HAP-1 (cell line): ENCODE measurements at regions of chr10 and their contacts with region 1.

Region 1: DNA sequence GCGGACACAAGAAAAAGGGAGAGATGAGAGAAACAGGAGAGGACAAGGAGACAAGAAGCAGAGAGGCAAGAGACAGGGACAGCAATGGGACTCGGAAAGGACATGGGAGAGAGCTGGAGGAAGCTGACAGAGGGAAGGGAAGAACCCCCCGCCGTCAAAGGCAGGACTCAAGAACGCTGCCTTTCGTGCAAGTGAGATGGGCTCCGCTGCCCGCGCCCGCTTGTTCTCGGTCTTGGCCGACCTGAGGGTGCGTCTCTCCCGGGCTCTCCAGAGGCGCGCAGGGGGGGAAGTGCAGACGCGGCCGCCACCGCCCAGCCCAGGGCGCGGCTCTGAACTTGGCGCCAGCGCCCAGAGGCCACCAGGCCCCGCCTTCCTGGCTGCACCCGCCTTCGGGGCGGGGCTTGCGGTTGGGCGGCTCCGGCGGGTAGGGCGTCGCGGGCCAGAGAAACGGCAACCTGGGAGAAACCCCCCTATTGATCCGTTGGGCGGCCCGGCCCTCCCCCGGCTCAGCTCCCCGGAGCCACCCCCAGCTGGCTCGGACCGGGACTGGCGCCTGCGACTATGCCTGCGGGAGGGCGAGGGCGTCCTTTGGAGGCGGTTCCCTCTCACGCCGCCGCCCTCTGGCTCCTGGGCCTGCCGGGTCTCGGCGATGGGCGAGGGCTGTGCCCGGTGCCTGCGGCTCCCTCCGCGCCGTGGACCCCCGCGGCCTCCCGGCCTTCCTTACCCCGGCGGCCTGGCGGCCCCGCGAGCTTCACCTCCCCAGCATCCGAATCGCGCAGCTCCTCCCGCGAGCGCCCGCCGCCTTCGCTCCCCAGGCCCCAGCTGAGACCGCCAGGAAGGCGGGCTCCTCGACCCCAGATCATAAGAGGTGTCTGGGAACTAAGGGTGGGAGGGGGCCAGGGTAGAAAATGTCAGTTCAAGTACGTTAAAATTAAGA is 2.2 kb upstream of the ANTXRL start:
- DNase-seq: peak; percentile 84 to 93
- H3K4me3 ChIP-seq: peak overlapping the region; percentile 37
- H3K4me1 ChIP-seq: 0 out of 2 replicates have a peak, but pooled peaks cover 3% of the 10 kb centered on the region
- H3K27me3 ChIP-seq: no peaks in the 10 kb centered on the region

Region 2: GRCh38 chr10:44510379-44511115 is 1774.0 kb before region 1 on chr10:
- in situ Hi-C with region 1: no loop called
- DNase-seq: no peak
- H3K4me3 ChIP-seq: no peak overlapping the region
- H3K4me1 ChIP-seq: no peaks in the 10 kb centered on the region
- H3K27me3 ChIP-seq: no peaks in the 10 kb centered on the region

Region 3: GRCh38 chr10:45817130-45817859 is 467.3 kb before region 1 on chr10:
- in situ Hi-C with region 1: no loop called
- DNase-seq: no peak
- H3K4me3 ChIP-seq: no peak overlapping the region
- H3K4me1 ChIP-seq: no peaks in the 10 kb centered on the region
- H3K27me3 ChIP-seq: no peaks in the 10 kb centered on the region

Region 4: GRCh38 chr10:46106410-46107255 is 177.9 kb before region 1 on chr10:
- in situ Hi-C with region 1: loop called (anchors 5 kb)
- DNase-seq: peak; percentile 55 to 80
- H3K4me3 ChIP-seq: peak overlapping the region; percentile 42
- H3K4me1 ChIP-seq: peaks cover 7% of the 10 kb centered on the region; the same call in 1 of the 2 replicates
- H3K27me3 ChIP-seq: no peaks in the 10 kb centered on the region

Region 5: GRCh38 chr10:47384148-47384921 is 1099.8 kb after region 1 on chr10 and contains the start of gene ZNF488:
- in situ Hi-C with region 1: loop called (anchors 5 kb)
- DNase-seq: peak; percentile 58 to 85
- H3K4me3 ChIP-seq: peak within 1 kb of the TSS; percentile 49
- H3K4me1 ChIP-seq: no peaks in the 10 kb centered on the region
- H3K27me3 ChIP-seq: peaks cover 4% of the 10 kb centered on the region